ENCODE measurements at regions of chr9 and their contacts with region 1.

Region 1: DNA sequence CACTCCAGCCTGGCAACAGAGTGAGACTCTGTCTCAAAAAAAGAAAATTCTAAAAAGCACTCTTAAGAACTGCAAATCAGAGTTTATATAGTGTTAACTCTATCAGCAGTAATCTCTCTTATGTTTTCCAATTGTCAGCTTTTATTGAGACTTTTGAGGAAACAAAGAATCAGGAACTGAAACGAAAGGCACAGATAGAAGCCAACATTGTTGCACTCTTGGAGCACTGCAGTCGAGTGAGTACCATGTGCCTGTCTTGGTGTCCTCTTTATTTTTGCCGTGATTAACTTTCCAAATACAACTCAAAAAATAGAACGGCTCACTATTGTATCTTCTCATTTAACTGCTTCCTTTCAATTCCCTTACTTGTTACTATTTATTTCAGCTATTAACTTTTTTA is 41.7 kb upstream of the LRRC19 start:
- DNase-seq: no peak
- H3K4me3 ChIP-seq: no peak overlapping the region
- H3K4me3 Mint-ChIP-seq: no peak overlapping the region
- H3K27ac ChIP-seq: no peak overlapping the region
- H3K27ac Mint-ChIP-seq: no peak overlapping the region
- H3K4me1 ChIP-seq: no peaks in the 10 kb centered on the region
- H3K4me1 Mint-ChIP-seq: no peaks in the 10 kb centered on the region
- H3K27me3 ChIP-seq: no peaks in the 10 kb centered on the region
- H3K27me3 Mint-ChIP-seq: no peaks in the 10 kb centered on the region

Region 2: DNA sequence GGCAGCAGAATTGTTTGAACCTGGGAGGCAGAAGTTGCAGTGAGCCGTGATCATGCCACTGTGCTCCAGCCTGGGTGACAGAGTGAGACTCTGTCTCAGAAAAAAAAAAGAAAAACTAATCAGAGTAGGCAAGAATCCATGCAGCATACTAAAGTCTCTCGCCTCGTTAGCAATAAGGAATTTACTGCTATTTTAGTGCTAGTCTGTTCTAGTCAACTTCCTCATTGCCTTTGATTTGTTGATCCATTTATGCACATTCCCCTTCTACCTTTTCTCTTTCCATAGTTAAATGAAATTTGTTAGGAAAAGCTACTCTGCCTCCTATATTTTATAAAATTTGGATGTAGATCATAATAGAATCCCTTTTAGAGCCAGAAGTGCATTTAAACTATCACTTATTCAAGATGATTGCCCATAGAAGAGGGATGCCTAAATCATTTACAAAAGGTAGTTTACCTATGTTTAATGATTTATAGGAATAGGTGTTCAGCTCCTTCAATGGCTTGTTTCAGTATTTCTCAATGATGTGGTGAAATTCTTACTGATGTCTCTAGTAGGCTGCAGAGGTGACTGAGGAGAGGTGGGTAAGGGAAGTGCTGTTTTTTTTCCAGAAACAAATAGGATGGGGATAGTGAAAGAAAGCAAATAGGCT is 43.6 kb before region 1 on chr9:
- CTCF ChIA-PET with region 1: no interaction called
- POLR2A ChIA-PET with region 1: no interaction called
- intact Hi-C with region 1: no loop called
- DNase-seq: no peak
- H3K4me3 ChIP-seq: no peak overlapping the region
- H3K4me3 Mint-ChIP-seq: no peak overlapping the region
- H3K27ac ChIP-seq: no peak overlapping the region
- H3K27ac Mint-ChIP-seq: no peak overlapping the region
- H3K4me1 ChIP-seq: no peaks in the 10 kb centered on the region
- H3K4me1 Mint-ChIP-seq: no peaks in the 10 kb centered on the region
- H3K27me3 ChIP-seq: no peaks in the 10 kb centered on the region
- H3K27me3 Mint-ChIP-seq: no peaks in the 10 kb centered on the region

Region 3: DNA sequence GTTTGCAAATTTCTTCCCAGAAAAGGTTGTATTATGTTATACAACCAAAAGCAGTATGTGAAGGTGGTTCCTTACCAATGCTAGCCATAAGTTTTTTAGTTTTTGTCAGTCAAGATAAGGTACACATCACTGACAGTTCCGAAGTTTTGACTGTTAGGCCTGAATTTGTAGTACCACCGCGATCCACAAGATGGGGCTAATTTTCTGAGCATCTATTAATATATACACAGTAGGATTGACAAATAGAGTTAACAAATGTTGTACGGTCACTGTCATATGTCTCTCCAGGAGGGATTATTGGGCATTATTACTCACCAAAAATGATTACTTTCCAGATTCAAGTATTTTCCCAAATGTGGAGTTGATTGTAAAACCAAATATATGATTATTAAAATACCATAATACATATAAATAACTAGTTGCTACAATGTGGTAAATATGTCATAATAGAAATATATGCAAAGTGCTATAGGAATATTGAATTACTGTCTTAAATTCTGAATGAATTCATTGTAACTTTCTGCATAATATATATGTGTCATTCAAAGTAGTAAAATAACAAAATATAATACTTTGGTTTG is 13.2 kb before region 1 on chr9:
- CTCF ChIA-PET with region 1: interaction called, 12 read pairs
- POLR2A ChIA-PET with region 1: no interaction called
- intact Hi-C with region 1: no loop called
- DNase-seq: peak in 4 of 5 donors; percentile 3 to 28 (median 12)
- H3K4me3 ChIP-seq: no peak overlapping the region
- H3K4me3 Mint-ChIP-seq: peak overlapping the region in 1 of 8 donors; percentile 6
- H3K27ac ChIP-seq: no peak overlapping the region
- H3K27ac Mint-ChIP-seq: no peak overlapping the region
- H3K4me1 ChIP-seq: no peaks in the 10 kb centered on the region
- H3K4me1 Mint-ChIP-seq: no peaks in the 10 kb centered on the region
- H3K27me3 ChIP-seq: no peaks in the 10 kb centered on the region
- H3K27me3 Mint-ChIP-seq: no peaks in the 10 kb centered on the region

Measured in CD4-positive, alpha-beta memory T cell (primary cell).